ENCODE measurements at regions of chr4 and their contacts with region 1.

Region 1: DNA sequence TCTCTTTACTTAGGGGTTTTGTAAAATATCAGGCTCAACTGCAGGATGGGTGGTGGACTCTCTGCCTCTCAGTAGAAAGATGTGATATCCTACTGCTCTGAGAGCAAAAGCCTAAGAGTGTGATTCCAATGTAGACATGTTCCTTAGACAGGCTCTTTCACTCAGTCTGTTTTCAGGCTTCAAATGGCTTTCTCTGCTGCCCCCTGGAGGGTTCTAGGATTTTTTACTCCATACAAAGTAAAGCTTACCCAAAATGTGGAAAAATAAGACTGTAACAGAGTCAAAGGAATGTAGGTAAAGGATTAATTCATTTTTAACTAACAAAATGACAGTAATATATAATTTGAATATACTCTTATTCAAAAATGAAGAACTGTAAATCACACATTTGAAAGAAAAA is 32.1 kb downstream of the ZGRF1 start:
- DNase-seq: peak; percentile 39
- ATAC-seq: peak; percentile 42
- H3K4me3 Mint-ChIP-seq: no peak overlapping the region
- H3K27ac Mint-ChIP-seq: no peak overlapping the region
- H3K4me1 Mint-ChIP-seq: no peaks in the 10 kb centered on the region
- H3K27me3 Mint-ChIP-seq: no peaks in the 10 kb centered on the region

Region 2: GRCh38 chr4:112075129-112075753 is 529.3 kb before region 1 on chr4:
- CTCF ChIA-PET with region 1: no interaction called
- POLR2A ChIA-PET with region 1: no interaction called
- intact Hi-C with region 1: no loop called
- DNase-seq: peak; percentile 33
- ATAC-seq: peak; percentile 74
- H3K4me3 Mint-ChIP-seq: no peak overlapping the region
- H3K27ac Mint-ChIP-seq: no peak overlapping the region
- H3K4me1 Mint-ChIP-seq: no peaks in the 10 kb centered on the region
- H3K27me3 Mint-ChIP-seq: peaks cover 4% of the 10 kb centered on the region

Region 3: DNA sequence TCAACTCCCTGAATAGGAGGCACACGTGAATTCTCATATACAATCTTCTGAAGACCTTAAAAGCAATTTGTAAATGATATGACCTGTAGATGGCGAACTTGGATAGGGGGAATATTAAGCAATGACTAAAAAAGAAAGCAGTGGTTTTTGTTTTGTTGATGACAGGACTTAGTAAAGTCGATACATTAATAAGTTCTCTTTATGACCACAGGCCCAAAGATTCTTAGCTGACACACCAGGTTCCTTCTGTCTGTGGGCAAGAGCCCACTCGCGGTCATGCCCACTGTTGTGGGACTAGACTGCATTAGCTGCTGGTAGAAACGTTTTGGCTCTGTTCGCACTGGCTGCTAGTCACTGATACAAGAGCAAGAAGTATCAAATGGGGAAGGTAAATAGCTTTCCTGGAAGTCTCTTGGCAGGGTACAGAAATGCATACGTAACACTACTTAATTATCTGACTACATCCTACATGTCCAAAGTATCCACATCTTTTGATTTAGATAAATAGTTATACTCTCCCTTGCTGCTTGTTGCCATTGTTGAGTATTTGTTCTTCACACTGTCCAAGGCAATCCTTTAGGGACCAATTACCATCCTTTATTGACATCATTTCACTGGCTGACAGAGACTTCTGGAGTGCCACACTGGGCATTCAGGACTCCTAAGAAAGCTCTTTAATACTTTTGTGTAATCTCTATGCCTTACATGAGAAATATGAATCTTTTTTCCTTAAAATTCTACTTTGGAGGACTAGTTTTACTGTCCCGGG is 276.4 kb before region 1 on chr4:
- CTCF ChIA-PET with region 1: interaction called, 5 read pairs
- POLR2A ChIA-PET with region 1: no interaction called
- intact Hi-C with region 1: loop called (anchors 5 to 10 kb)
- DNase-seq: peak; percentile 20
- ATAC-seq: peak; percentile 47
- H3K4me3 Mint-ChIP-seq: no peak overlapping the region
- H3K27ac Mint-ChIP-seq: no peak overlapping the region
- H3K4me1 Mint-ChIP-seq: peaks cover 4% of the 10 kb centered on the region
- H3K27me3 Mint-ChIP-seq: no peaks in the 10 kb centered on the region

Region 4: DNA sequence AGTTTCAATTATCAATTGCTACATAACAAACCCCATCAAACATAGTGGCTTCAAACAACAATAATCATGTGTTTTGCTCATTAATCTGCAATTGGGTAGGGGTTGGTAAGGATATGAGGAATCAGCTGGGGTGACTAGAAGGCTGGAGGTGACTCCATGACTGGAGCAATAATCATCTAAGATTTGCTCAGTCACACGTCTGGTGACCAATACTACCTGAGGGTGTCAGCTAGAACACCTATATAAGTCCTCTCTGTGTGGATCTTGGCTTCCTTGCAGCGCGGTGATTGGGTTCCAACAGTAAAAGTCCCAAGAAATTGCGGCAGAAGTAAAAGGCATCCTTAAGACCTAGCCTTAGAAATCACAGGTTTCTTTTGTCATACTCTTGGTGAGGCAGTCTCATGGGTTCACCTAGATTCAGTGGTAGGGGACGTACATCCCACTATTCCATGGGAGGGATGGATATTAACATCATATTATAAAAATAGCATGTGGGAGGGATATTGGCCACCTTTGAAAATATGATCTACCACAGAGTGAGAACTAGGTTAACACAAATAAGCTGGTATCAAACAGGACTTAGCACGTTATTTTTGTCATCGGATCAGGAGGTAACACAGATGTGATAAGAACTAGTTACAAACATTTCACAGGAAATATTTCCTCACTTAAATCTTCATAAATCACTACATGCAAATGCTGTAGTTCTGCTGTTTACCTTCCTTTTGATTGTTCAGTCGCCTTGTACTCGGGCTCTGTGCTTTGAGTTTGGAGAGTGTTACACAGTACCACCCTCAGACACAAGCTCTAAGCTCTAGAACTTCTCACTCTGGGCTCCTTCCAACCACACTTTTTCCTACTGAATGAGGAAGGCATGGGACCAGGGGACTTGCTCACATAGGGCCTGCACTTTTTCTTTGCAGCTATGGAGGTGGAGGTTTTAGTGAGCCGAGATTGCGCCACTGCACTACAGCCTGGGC is 110.6 kb after region 1 on chr4:
- CTCF ChIA-PET with region 1: no interaction called
- POLR2A ChIA-PET with region 1: no interaction called
- intact Hi-C with region 1: no loop called
- DNase-seq: no peak
- ATAC-seq: no peak
- H3K4me3 Mint-ChIP-seq: no peak overlapping the region
- H3K27ac Mint-ChIP-seq: no peak overlapping the region
- H3K4me1 Mint-ChIP-seq: no peaks in the 10 kb centered on the region
- H3K27me3 Mint-ChIP-seq: peaks cover 14% of the 10 kb centered on the region

Region 5: DNA sequence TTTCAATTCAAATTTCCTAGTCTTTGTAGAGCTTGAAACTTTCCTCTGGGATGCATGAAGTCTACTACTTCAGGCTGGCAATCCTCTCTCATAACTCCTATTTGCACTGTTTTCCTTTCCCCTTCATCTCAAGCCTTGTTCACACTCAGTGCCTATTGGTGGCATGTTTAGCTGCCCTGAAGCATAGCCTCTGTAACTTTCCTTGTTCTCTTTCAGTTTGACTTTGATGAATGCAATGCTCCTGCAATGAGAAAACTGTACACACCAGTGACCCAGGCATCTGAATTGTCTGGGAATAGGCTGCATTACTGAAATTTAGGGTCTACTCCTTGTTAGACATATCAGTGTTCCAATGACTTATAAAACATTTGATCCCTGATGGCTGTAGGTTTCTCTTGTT is 526.5 kb after region 1 on chr4:
- CTCF ChIA-PET with region 1: no interaction called
- POLR2A ChIA-PET with region 1: no interaction called
- intact Hi-C with region 1: no loop called
- DNase-seq: no peak
- ATAC-seq: no peak
- H3K4me3 Mint-ChIP-seq: no peak overlapping the region
- H3K27ac Mint-ChIP-seq: no peak overlapping the region
- H3K4me1 Mint-ChIP-seq: no peaks in the 10 kb centered on the region
- H3K27me3 Mint-ChIP-seq: peaks cover 10% of the 10 kb centered on the region